ENCODE measurements at regions of chr5 and their contacts with region 1.

Region 1: GRCh38 chr5:141430332-141431113 is at the start of gene PCDHGA12:
- DNase-seq: peak; percentile 69 to 82
- ATAC-seq: peak; percentile 90 to 95 (median 90)
- H3K4me3 ChIP-seq: peak within 1 kb of the TSS; percentile 64
- H3K27ac ChIP-seq: peak within 1 kb of the TSS; percentile 56
- H3K4me1 ChIP-seq: no peaks in the 10 kb centered on the region
- H3K27me3 ChIP-seq: peaks cover 0 to 11% (median 6%) of the 10 kb centered on the region in 3 donors
- CTCF ChIP-seq: peak; percentile 66
- total RNA-seq, gene PCDHGA12: 2.6 to 6.9 (median 3.6) TPM

Region 2: GRCh38 chr5:140821375-140822280 is 608.9 kb before region 1 on chr5 and contains the start of gene PCDHA5:
- intact Hi-C with region 1: no loop called
- DNase-seq: no peak
- ATAC-seq: no peak
- H3K4me3 ChIP-seq: no peak within 1 kb of the TSS
- H3K27ac ChIP-seq: no peak within 1 kb of the TSS
- H3K4me1 ChIP-seq: no peaks in the 10 kb centered on the region
- H3K27me3 ChIP-seq: peaks cover 0 to 11% (median 2%) of the 10 kb centered on the region in 3 donors
- CTCF ChIP-seq: peak; percentile 19
- total RNA-seq, gene PCDHA5: not detected

Region 3: DNA sequence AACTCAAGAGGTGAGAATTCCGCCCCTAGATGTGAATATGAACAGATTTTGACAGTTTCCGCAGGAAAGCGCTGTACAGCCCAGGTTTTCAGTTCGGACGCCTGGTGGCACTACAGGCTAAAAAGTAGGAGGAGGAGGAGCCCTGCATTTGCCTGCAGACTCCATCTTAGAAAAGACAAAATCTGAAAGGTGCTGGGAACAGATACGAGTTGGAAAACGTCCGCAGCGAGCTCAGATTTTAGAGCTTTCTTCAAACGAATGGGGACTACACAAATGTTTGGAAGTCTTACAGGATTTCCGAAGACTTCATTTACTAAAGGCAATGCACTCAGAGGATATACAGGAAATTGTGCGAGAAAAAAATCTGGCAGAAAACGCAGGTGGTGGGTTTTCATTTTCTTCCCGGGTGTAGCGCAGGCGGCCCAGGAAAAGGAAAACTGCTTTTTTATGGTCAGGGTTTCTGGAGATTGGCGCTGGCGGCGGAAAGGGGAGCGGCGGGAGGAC is 346.0 kb before region 1 on chr5:
- intact Hi-C with region 1: no loop called
- DNase-seq: no peak
- ATAC-seq: peak in 2 of 4 donors; percentile 66 to 85
- H3K4me3 ChIP-seq: peak overlapping the region; percentile 62
- H3K27ac ChIP-seq: no peak overlapping the region
- H3K4me1 ChIP-seq: no peaks in the 10 kb centered on the region
- H3K27me3 ChIP-seq: peaks cover 0 to 3% (median 0%) of the 10 kb centered on the region in 3 donors
- CTCF ChIP-seq: peak; percentile 46

Region 4: DNA sequence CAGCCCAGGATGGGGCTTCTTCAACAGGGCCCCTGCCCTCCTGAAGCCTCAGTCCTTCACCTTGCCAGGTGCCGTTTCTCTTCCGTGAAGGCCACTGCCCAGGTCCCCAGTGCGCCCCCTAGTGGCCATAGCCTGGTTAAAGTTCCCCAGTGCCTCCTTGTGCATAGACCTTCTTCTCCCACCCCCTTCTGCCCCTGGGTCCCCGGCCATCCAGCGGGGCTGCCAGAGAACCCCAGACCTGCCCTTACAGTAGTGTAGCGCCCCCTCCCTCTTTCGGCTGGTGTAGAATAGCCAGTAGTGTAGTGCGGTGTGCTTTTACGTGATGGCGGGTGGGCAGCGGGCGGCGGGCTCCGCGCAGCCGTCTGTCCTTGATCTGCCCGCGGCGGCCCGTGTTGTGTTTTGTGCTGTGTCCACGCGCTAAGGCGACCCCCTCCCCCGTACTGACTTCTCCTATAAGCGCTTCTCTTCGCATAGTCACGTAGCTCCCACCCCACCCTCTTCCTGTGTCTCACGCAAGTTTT is 81.9 kb after region 1 on chr5:
- intact Hi-C with region 1: loop called in 1 of 2 experiments (anchors 5 kb)
- DNase-seq: peak; percentile 87 to 90
- ATAC-seq: peak; percentile 23 to 54 (median 35)
- H3K4me3 ChIP-seq: peak overlapping the region; percentile 61
- H3K27ac ChIP-seq: peak overlapping the region; percentile 90
- H3K4me1 ChIP-seq: peaks cover 61% of the 10 kb centered on the region
- H3K27me3 ChIP-seq: no peaks in the 10 kb centered on the region
- CTCF ChIP-seq: peak; percentile 83